Naive thymus-derived CD4-positive, alpha-beta T cell (primary cell): ENCODE measurements at regions of chr10 and their contacts with region 1.

Region 1: GRCh38 chr10:103685880-103686669 is 169.3 kb downstream of the SH3PXD2A start:
- DNase-seq: peak; percentile 45 to 82 (median 69)
- ATAC-seq: peak; percentile 93
- H3K4me3 ChIP-seq: no peak overlapping the region
- H3K4me3 Mint-ChIP-seq: no peak overlapping the region
- H3K27ac ChIP-seq: no peak overlapping the region
- H3K27ac Mint-ChIP-seq: peak overlapping the region in 4 of 9 donors; percentile 29 to 48 (median 38)
- H3K4me1 ChIP-seq: no peaks in the 10 kb centered on the region
- H3K4me1 Mint-ChIP-seq: peaks cover 0 to 15% (median 0%) of the 10 kb centered on the region in 7 donors
- H3K27me3 ChIP-seq: no peaks in the 10 kb centered on the region
- H3K27me3 Mint-ChIP-seq: peaks cover 0 to 4% (median 0%) of the 10 kb centered on the region in 5 donors

Region 2: GRCh38 chr10:103416436-103417147 is 269.5 kb before region 1 on chr10:
- CTCF ChIA-PET with region 1: no interaction called
- POLR2A ChIA-PET with region 1: no interaction called
- intact Hi-C with region 1: loop called in 1 of 2 experiments (anchors 1 kb)
- DNase-seq: peak; percentile 29 to 62 (median 52)
- ATAC-seq: peak; percentile 64
- H3K4me3 ChIP-seq: no peak overlapping the region
- H3K4me3 Mint-ChIP-seq: no peak overlapping the region
- H3K27ac ChIP-seq: no peak overlapping the region
- H3K27ac Mint-ChIP-seq: no peak overlapping the region
- H3K4me1 ChIP-seq: no peaks in the 10 kb centered on the region
- H3K4me1 Mint-ChIP-seq: peaks cover 0 to 6% (median 0%) of the 10 kb centered on the region in 7 donors
- H3K27me3 ChIP-seq: no peaks in the 10 kb centered on the region
- H3K27me3 Mint-ChIP-seq: no peaks in the 10 kb centered on the region

Region 3: DNA sequence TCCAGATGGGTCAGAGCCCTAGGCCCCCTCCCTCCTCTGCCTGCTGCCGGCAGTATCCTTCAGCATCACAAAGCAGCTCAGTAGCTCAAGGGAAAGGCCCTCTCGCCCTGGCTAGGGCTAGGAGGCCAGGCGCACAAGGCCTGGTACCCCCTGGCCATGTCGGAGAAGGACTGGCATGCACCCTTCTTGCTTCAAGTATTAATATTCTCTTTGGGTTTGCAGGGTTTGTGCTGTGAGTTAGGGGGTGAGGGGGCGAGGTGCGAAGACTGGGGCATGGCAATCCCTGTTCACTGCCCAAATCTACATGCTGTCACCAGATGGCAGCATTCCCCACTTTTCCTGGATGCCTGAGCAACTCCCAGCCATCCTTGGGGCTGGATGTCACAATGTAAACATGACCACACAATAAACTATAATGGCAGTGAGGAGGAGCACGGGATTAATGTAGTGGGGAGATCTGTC is 87.4 kb before region 1 on chr10:
- CTCF ChIA-PET with region 1: interaction called, 9 read pairs
- POLR2A ChIA-PET with region 1: no interaction called
- intact Hi-C with region 1: loop called in 1 of 2 experiments (anchors 1 kb)
- DNase-seq: no peak
- ATAC-seq: no peak
- H3K4me3 ChIP-seq: no peak overlapping the region
- H3K4me3 Mint-ChIP-seq: no peak overlapping the region
- H3K27ac ChIP-seq: no peak overlapping the region
- H3K27ac Mint-ChIP-seq: peak overlapping the region in 1 of 9 donors; percentile 6
- H3K4me1 ChIP-seq: no peaks in the 10 kb centered on the region
- H3K4me1 Mint-ChIP-seq: peaks cover 0 to 1% (median 0%) of the 10 kb centered on the region in 7 donors
- H3K27me3 ChIP-seq: no peaks in the 10 kb centered on the region
- H3K27me3 Mint-ChIP-seq: no peaks in the 10 kb centered on the region

Region 4: GRCh38 chr10:103612462-103613365 is 73.4 kb before region 1 on chr10:
- CTCF ChIA-PET with region 1: interaction called, 17 read pairs
- POLR2A ChIA-PET with region 1: interaction called, 3 read pairs
- intact Hi-C with region 1: no loop called
- DNase-seq: no peak
- ATAC-seq: no peak
- H3K4me3 ChIP-seq: no peak overlapping the region
- H3K4me3 Mint-ChIP-seq: no peak overlapping the region
- H3K27ac ChIP-seq: no peak overlapping the region
- H3K27ac Mint-ChIP-seq: no peak overlapping the region
- H3K4me1 ChIP-seq: no peaks in the 10 kb centered on the region
- H3K4me1 Mint-ChIP-seq: peaks cover 0 to 5% (median 0%) of the 10 kb centered on the region in 7 donors
- H3K27me3 ChIP-seq: no peaks in the 10 kb centered on the region
- H3K27me3 Mint-ChIP-seq: no peaks in the 10 kb centered on the region

Region 5: GRCh38 chr10:103666087-103666761 is 19.9 kb before region 1 on chr10:
- CTCF ChIA-PET with region 1: interaction called, 12 read pairs
- POLR2A ChIA-PET with region 1: no interaction called
- intact Hi-C with region 1: loop called in 1 of 2 experiments (anchors 2 kb)
- DNase-seq: no peak
- ATAC-seq: no peak
- H3K4me3 ChIP-seq: no peak overlapping the region
- H3K4me3 Mint-ChIP-seq: no peak overlapping the region
- H3K27ac ChIP-seq: no peak overlapping the region
- H3K27ac Mint-ChIP-seq: peak overlapping the region in 7 of 9 donors; percentile 21 to 86 (median 55)
- H3K4me1 ChIP-seq: peaks cover 4 to 15% of the 10 kb centered on the region in 2 donors
- H3K4me1 Mint-ChIP-seq: peaks cover 15 to 37% (median 24%) of the 10 kb centered on the region in 7 donors
- H3K27me3 ChIP-seq: no peaks in the 10 kb centered on the region
- H3K27me3 Mint-ChIP-seq: no peaks in the 10 kb centered on the region